ENCODE measurements at regions of chr12 and their contacts with region 1.

Region 1: DNA sequence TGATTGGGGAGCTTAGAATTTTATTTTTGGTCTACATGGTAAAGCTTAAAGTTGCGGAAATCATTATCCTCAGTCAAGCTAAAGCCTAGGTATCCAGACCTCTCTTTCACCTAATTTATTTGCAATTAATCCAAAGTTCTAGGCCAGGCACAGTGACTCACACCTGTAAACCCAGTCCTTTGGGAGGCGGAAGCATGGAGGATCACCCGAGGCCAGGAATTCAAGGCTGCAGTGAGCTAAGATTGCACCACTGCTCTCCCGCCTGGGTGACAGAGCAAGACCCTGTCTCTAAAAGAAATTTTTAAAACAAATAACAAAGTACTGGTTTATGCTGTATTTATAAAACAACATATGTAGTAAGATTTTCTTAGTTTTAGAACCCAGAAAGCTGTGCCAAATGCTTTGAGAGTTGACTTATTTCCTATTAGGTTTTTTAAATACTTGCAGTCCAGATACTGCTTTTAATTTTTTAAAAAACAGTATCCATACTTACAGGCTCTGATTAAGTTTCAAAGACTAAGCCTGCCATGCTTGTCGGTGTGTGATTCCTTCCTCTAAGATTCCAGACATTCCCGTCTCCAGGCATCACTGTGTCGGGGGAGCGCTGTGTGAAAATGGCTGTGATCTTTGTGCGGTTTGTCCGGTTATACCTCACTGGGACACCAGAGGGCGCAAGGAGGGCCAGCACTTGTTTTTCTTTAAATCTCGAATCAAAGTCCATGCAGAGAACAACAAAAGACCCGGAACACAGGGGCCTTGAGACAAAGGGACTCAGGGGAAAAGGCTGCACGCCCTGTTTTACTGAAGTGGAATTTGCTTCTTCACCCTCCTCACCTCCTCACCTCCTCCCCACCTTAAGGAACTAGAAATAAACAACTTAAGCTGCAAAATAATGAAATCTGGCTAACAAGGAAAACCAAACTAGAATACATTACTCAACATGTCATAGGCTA is 24.6 kb upstream of the TMPO start:
- DNase-seq: peak; percentile 62 to 75 (median 74)
- H3K4me3 ChIP-seq: peak overlapping the region in 2 of 3 experiments; percentile 38 to 60
- H3K4me3 Mint-ChIP-seq: peak overlapping the region; percentile 48 to 58
- H3K27ac ChIP-seq: peak overlapping the region in 1 of 2 donors; percentile 62
- H3K27ac Mint-ChIP-seq: peak overlapping the region; percentile 66 to 90 (median 86)
- H3K4me1 ChIP-seq: peaks cover 9 to 18% of the 10 kb centered on the region in 2 donors
- H3K4me1 Mint-ChIP-seq: peaks cover 14% of the 10 kb centered on the region
- H3K27me3 ChIP-seq: no peaks in the 10 kb centered on the region
- H3K27me3 Mint-ChIP-seq: peaks cover 0 to 1% (median 0%) of the 10 kb centered on the region in 3 donors
- CTCF ChIP-seq: peak; percentile 85

Region 2: GRCh38 chr12:98516184-98516873 is 25.6 kb after region 1 on chr12:
- intact Hi-C with region 1: loop called (anchors 1 to 2 kb)
- DNase-seq: peak; percentile 66 to 88 (median 78)
- H3K4me3 ChIP-seq: peak overlapping the region; percentile 76 to 93 (median 90)
- H3K4me3 Mint-ChIP-seq: peak overlapping the region; percentile 97 to 98
- H3K27ac ChIP-seq: peak overlapping the region; percentile 12 to 89
- H3K27ac Mint-ChIP-seq: peak overlapping the region; percentile 83 to 96 (median 96)
- H3K4me1 ChIP-seq: peaks cover 38 to 63% of the 10 kb centered on the region in 2 donors
- H3K4me1 Mint-ChIP-seq: peaks cover 51% of the 10 kb centered on the region
- H3K27me3 ChIP-seq: no peaks in the 10 kb centered on the region
- H3K27me3 Mint-ChIP-seq: peaks cover 0 to 2% (median 0%) of the 10 kb centered on the region in 3 donors
- CTCF ChIP-seq: peak; percentile 83